ENCODE measurements at regions of chr16 and their contacts with region 1.

Region 1: GRCh38 chr16:84726079-84726668 is 26.4 kb downstream of the USP10 start:
- DNase-seq: peak; percentile 94
- ATAC-seq: peak; percentile 95
- H3K4me3 ChIP-seq: peak overlapping the region; percentile 27
- H3K27ac ChIP-seq: peak overlapping the region; percentile 31
- H3K4me1 ChIP-seq: peaks cover 42% of the 10 kb centered on the region
- H3K27me3 ChIP-seq: no peaks in the 10 kb centered on the region
- CTCF ChIP-seq: peak; percentile 97

Region 2: DNA sequence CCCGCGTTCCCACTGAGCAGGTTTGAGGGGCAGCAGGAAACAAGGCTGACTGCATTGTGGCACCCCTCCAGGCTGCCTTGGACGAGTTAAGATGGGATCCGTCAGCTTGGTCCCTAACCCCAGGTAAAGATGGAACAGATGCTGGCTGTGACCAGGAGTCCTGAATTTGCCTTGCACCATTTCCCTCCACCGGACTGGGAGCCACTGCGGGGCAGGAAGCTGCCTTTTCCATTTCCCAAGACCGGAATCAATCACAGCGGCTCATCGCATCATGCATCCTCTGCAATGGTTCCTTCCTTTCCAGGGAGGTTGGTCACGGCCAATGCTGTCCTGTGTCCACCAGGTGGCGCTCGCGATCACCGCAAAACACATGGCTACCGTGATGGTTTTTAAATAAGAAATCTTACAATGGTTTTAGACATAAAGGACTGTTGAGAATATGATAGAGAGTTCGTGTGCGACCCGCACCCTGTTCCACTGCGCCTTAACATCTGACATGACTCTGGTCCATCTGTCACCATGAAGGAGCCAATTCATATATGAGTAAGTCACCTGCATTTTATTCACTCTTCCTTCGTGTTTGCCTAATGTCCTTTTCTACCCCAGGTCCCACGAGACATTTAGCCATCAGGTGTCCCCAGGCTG is 214.9 kb before region 1 on chr16:
- intact Hi-C with region 1: loop called (anchors 10 kb)
- DNase-seq: peak; percentile 90
- ATAC-seq: peak; percentile 88
- H3K4me3 ChIP-seq: no peak overlapping the region
- H3K27ac ChIP-seq: no peak overlapping the region
- H3K4me1 ChIP-seq: peaks cover 3% of the 10 kb centered on the region
- H3K27me3 ChIP-seq: no peaks in the 10 kb centered on the region
- CTCF ChIP-seq: peak; percentile 99

Region 3: GRCh38 chr16:84629580-84629979 is 96.6 kb before region 1 on chr16:
- intact Hi-C with region 1: loop called (anchors 10 kb)
- DNase-seq: no peak
- ATAC-seq: no peak
- H3K4me3 ChIP-seq: no peak overlapping the region
- H3K27ac ChIP-seq: no peak overlapping the region
- H3K4me1 ChIP-seq: peaks cover 11% of the 10 kb centered on the region
- H3K27me3 ChIP-seq: no peaks in the 10 kb centered on the region
- CTCF ChIP-seq: no peak

Region 4: DNA sequence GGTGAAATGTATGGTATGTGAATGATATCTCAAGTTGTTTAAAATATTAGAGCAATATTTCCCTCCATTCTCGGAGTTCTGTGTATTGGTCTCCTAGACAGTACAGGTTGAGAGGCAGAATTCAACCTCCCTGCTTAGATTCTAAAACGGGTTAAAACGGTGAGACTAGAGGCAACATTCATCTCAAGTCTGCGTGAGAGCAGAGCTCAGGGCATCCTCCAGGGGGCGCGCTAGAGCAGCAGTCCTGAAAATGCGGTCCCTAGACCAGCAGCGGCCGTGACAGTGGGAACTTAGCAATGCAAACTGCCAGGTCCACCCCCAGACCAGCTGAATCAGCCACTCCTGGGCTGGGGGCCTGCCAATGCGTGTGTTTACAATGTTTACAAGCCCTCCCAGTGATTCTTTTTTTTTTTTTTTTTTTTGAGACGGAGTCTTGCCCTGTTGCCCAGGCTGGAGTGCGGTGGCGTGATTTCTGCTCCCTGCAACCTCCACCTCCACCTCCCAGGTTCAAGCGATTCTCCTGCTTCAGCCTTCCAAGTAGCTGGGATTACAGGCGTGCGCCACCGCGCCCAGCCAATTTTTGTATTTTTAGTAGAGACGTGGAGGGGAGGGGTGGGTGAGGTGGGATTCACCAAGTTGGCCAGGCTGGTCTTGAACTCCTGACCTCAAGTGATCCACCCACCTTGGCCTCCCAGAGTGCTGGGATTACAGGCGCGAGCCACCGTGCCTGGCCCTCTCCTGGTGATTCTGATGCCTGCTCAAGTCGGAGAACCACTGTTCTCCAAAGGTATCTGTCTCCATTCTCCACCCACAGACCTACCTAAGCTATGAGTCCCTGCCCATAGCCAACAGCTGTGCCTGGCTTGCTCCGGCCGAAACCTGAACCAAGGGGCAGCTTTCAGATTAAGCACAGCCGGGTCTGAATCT is 53.6 kb before region 1 on chr16:
- intact Hi-C with region 1: loop called (anchors 5 kb)
- DNase-seq: peak; percentile 91
- ATAC-seq: peak; percentile 95
- H3K4me3 ChIP-seq: no peak overlapping the region
- H3K27ac ChIP-seq: no peak overlapping the region
- H3K4me1 ChIP-seq: no peaks in the 10 kb centered on the region
- H3K27me3 ChIP-seq: no peaks in the 10 kb centered on the region
- CTCF ChIP-seq: peak; percentile 92

Region 5: GRCh38 chr16:84785843-84786581 is 59.8 kb after region 1 on chr16:
- intact Hi-C with region 1: no loop called
- DNase-seq: peak; percentile 68
- ATAC-seq: peak; percentile 41
- H3K4me3 ChIP-seq: no peak overlapping the region
- H3K27ac ChIP-seq: no peak overlapping the region
- H3K4me1 ChIP-seq: peaks cover 9% of the 10 kb centered on the region
- H3K27me3 ChIP-seq: no peaks in the 10 kb centered on the region
- CTCF ChIP-seq: no peak

Region 6: GRCh38 chr16:84881702-84882521 is 155.7 kb after region 1 on chr16:
- intact Hi-C with region 1: no loop called
- DNase-seq: no peak
- ATAC-seq: no peak
- H3K4me3 ChIP-seq: no peak overlapping the region
- H3K27ac ChIP-seq: no peak overlapping the region
- H3K4me1 ChIP-seq: no peaks in the 10 kb centered on the region
- H3K27me3 ChIP-seq: no peaks in the 10 kb centered on the region
- CTCF ChIP-seq: no peak

Measured in upper lobe of right lung (tissue), 1 donor.